H1 (cell line): ENCODE measurements at regions of chr13 and their contacts with region 1.

Region 1: GRCh38 chr13:21297914-21298831 is 121.7 kb downstream of the MRPL57 start:
- DNase-seq: peak; percentile 73 to 91
- H3K4me3 ChIP-seq: peak overlapping the region; percentile 48 to 98 (median 92)
- H3K27ac ChIP-seq: peak overlapping the region; percentile 52; the same call in 1 of the 2 replicates
- H3K4me1 ChIP-seq: peaks cover 0 to 2% (median 0%) of the 10 kb centered on the region in 4 experiments; a peak in 3 of 7 replicates
- H3K27me3 ChIP-seq: no peaks in the 10 kb centered on the region
- CTCF ChIP-seq: peak; percentile 82 to 87 (median 83)
- EP300 ChIP-seq: no peak; a peak in 1 of 3 replicates
- POLR2A ChIP-seq: peak in 1 of 2 experiments; percentile 54; a peak in 1 of 3 replicates
- RAD21 ChIP-seq: peak; percentile 29 to 54

Region 2: GRCh38 chr13:21124852-21125251 is 173.3 kb before region 1 on chr13:
- CTCF ChIA-PET with region 1: no interaction called
- POLR2A ChIA-PET with region 1: no interaction called
- DNase-seq: no peak
- H3K4me3 ChIP-seq: no peak overlapping the region
- H3K27ac ChIP-seq: no peak overlapping the region
- H3K4me1 ChIP-seq: peaks cover 0 to 11% (median 5%) of the 10 kb centered on the region in 4 experiments; a peak in 6 of 7 replicates
- H3K27me3 ChIP-seq: no peaks in the 10 kb centered on the region
- CTCF ChIP-seq: no peak
- EP300 ChIP-seq: no peak
- POLR2A ChIP-seq: no peak
- RAD21 ChIP-seq: no peak

Region 3: DNA sequence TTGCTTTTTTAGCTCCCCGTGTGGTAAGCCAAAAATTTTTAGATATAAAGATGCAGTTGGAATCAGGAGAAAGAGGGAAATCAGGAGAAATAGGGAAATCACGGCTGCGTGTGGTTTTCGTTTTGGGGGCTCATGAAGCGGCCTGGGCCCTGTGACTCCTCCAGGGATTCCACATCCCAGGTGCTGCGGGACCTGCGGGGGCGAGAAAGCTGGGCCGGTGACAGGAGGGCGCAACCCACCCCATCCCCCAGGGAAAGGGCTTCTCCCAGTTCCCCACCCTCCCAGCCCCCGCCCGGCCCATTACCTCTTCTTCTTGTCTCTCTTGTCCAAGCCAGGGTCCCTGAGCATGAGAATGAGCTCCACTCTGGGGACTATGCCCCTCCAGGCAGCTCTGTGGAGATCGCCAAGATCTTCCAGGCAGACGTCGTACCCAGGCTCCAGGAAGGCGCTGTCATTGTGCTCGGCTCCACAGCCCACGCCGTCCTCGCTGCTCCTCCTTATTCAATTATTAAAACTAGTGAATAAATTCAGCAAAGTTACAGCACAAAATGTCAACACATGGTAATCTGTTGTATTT is 10.8 kb before region 1 on chr13:
- CTCF ChIA-PET with region 1: interaction called, 11 read pairs
- POLR2A ChIA-PET with region 1: no interaction called
- DNase-seq: no peak
- H3K4me3 ChIP-seq: no peak overlapping the region
- H3K27ac ChIP-seq: no peak overlapping the region
- H3K4me1 ChIP-seq: peaks cover 0 to 3% (median 0%) of the 10 kb centered on the region in 4 experiments; a peak in 2 of 7 replicates
- H3K27me3 ChIP-seq: no peaks in the 10 kb centered on the region
- CTCF ChIP-seq: no peak
- EP300 ChIP-seq: no peak
- POLR2A ChIP-seq: no peak
- RAD21 ChIP-seq: no peak

Region 4: GRCh38 chr13:21326155-21327031 is 28.2 kb after region 1 on chr13:
- CTCF ChIA-PET with region 1: interaction called, 40 read pairs
- POLR2A ChIA-PET with region 1: interaction called, 11 read pairs
- DNase-seq: peak; percentile 69 to 83
- H3K4me3 ChIP-seq: peak overlapping the region; percentile 37 to 60 (median 48)
- H3K27ac ChIP-seq: peak overlapping the region; percentile 88
- H3K4me1 ChIP-seq: peaks cover 19 to 32% (median 21%) of the 10 kb centered on the region in 4 experiments
- H3K27me3 ChIP-seq: peaks cover 0 to 2% (median 0%) of the 10 kb centered on the region in 4 experiments; a peak in 2 of 7 replicates
- CTCF ChIP-seq: no peak
- EP300 ChIP-seq: 0 out of 3 replicates have a peak, but pooled peaks of 1 of the 2 experiments have one; percentile 45
- POLR2A ChIP-seq: peak; percentile 57 to 83
- RAD21 ChIP-seq: peak in 1 of 2 experiments; percentile 30; a peak in 2 of 4 replicates

Region 5: GRCh38 chr13:21383090-21383489 is 84.9 kb after region 1 on chr13:
- CTCF ChIA-PET with region 1: interaction called, 11 read pairs
- POLR2A ChIA-PET with region 1: no interaction called
- DNase-seq: no peak
- H3K4me3 ChIP-seq: no peak overlapping the region
- H3K27ac ChIP-seq: no peak overlapping the region
- H3K4me1 ChIP-seq: no peaks in the 10 kb centered on the region
- H3K27me3 ChIP-seq: no peaks in the 10 kb centered on the region
- CTCF ChIP-seq: no peak
- EP300 ChIP-seq: no peak
- POLR2A ChIP-seq: no peak
- RAD21 ChIP-seq: no peak

Region 6: DNA sequence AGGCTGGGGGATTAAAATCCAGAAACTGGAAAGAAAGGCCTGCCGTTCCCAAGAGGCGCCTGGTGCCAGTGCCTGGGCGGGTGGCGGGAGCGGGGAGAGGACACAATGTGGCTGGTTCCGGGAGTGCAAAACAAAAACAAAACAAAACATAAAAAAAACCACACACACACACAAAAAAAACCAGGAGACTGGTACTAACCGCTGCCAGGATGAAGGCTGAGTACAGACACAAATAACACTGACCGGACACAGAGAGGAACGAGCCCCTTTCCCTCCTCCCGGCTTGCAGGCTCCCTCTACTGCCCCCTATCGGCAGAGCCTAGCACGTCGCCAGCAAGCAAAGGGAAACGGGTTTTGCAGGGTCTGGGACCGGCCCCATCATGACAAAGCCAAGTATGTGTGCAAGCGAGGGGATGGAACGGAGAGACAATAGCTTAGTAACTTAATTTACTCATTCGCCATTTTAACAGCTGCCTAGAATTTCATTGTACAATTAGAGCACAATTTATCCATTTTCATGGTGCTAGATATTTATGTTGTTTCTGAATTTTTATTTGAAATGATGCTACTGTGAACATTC is 178.8 kb after region 1 on chr13:
- CTCF ChIA-PET with region 1: interaction called, 74 read pairs
- POLR2A ChIA-PET with region 1: interaction called, 9 read pairs
- DNase-seq: peak; percentile 90 to 96
- H3K4me3 ChIP-seq: peak overlapping the region; percentile 19 to 54 (median 28); a peak in 5 of 8 replicates
- H3K27ac ChIP-seq: no peak overlapping the region
- H3K4me1 ChIP-seq: 0 out of 7 replicates have a peak, but pooled peaks cover 0 to 2% (median 0%) of the 10 kb centered on the region in 4 experiments
- H3K27me3 ChIP-seq: no peaks in the 10 kb centered on the region
- CTCF ChIP-seq: peak; percentile 86 to 98 (median 95)
- EP300 ChIP-seq: 0 out of 3 replicates have a peak, but pooled peaks of 1 of the 2 experiments have one; percentile 38
- POLR2A ChIP-seq: peak in 1 of 2 experiments; percentile 40; a peak in 1 of 3 replicates
- RAD21 ChIP-seq: peak; percentile 82 to 87

Region 7: DNA sequence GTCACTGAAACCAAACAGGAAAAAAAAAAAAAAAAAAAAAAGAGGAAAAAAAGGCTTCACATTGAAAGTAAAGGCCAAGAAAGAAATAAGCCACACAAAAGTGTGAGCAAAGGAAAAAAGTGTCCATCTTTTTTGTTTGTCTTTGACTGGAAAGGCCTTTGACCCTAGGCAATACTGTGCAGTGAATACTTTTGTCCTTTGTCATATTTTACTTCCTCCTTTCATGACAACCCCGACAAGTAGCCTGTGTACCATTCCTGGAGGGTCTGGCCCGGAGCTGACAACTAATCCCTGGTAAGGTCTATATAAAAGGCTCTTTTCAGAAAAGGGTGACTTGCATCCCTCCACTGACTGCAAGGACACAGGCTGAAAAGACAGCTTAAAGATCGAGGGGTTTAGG is 318.7 kb after region 1 on chr13:
- CTCF ChIA-PET with region 1: no interaction called
- POLR2A ChIA-PET with region 1: no interaction called
- DNase-seq: no peak
- H3K4me3 ChIP-seq: no peak overlapping the region
- H3K27ac ChIP-seq: no peak overlapping the region
- H3K4me1 ChIP-seq: no peaks in the 10 kb centered on the region
- H3K27me3 ChIP-seq: no peaks in the 10 kb centered on the region; a peak in 1 of 7 replicates
- CTCF ChIP-seq: no peak
- EP300 ChIP-seq: no peak
- POLR2A ChIP-seq: no peak
- RAD21 ChIP-seq: no peak